MCF 10A (cell line): ENCODE measurements at regions of chr15 and their contacts with region 1.

Region 1: GRCh38 chr15:55846116-55846707 is 103.3 kb upstream of the PRTG start:
- DNase-seq: peak; percentile 81
- H3K4me3 Mint-ChIP-seq: no peak overlapping the region
- H3K27ac Mint-ChIP-seq: no peak overlapping the region
- H3K4me1 Mint-ChIP-seq: peaks cover 6% of the 10 kb centered on the region
- H3K27me3 Mint-ChIP-seq: no peaks in the 10 kb centered on the region
- CTCF ChIP-seq: peak; percentile 79

Region 2: DNA sequence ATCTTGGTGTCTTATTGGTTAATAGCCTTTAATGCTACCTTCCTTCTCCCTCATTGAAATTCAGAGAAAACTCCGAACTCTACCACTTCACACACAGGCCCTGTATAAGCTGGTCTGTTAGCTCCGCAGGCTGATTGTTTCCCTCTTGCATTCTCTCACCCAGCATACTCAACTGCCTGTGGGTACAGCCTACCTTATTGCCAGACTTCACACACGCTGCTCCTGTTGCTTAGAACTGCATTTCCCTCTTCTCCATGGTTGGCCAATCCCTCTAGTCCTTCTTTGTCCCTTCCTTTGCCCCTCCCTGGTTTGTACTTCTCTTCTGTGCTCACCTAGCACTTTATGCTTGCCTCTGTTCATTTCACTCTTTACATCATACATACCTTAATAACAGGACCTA is 10.3 kb before region 1 on chr15:
- CTCF ChIA-PET with region 1: interaction called, 13 read pairs
- POLR2A ChIA-PET with region 1: interaction called, 4 read pairs
- intact Hi-C with region 1: no loop called
- DNase-seq: no peak
- H3K4me3 Mint-ChIP-seq: no peak overlapping the region
- H3K27ac Mint-ChIP-seq: no peak overlapping the region
- H3K4me1 Mint-ChIP-seq: no peaks in the 10 kb centered on the region
- H3K27me3 Mint-ChIP-seq: no peaks in the 10 kb centered on the region
- CTCF ChIP-seq: no peak

Region 3: DNA sequence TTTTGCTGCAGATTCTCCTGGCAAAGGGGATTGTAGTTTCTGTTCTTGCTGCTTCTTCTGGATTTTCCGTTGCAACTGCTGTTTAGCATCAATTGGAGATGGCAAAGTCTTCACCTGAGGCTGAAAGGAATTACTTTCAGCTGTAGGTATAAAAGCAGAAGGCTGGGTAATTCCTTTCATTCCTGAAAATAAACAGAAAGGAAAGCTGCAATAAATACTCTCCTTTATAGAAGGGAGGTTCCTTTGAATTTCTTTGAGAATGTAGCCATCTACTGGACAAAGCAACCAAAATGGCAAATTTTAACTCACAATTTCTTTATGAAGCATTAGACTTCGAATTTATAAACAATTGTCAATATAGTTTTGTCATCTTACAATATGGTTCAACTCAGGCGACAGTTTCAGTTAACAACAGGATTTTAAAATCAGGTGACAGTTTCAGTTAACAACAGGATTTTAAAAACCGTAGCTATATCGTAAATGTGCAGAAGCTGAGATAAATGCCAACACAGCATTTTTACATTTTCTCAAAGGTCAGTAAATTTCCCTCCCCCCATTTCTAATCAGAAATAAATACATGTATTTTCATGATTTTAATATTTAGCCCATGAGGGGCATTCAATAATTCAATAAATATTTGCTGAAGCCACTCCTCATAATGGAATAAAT is 252.1 kb after region 1 on chr15:
- CTCF ChIA-PET with region 1: no interaction called
- POLR2A ChIA-PET with region 1: no interaction called
- intact Hi-C with region 1: loop called (anchors 5 kb)
- DNase-seq: no peak
- H3K4me3 Mint-ChIP-seq: no peak overlapping the region
- H3K27ac Mint-ChIP-seq: no peak overlapping the region
- H3K4me1 Mint-ChIP-seq: peaks cover 6% of the 10 kb centered on the region
- H3K27me3 Mint-ChIP-seq: no peaks in the 10 kb centered on the region
- CTCF ChIP-seq: no peak

Region 4: GRCh38 chr15:56176996-56177395 is 330.8 kb after region 1 on chr15:
- CTCF ChIA-PET with region 1: no interaction called
- POLR2A ChIA-PET with region 1: no interaction called
- intact Hi-C with region 1: no loop called
- DNase-seq: peak; percentile 9
- H3K4me3 Mint-ChIP-seq: no peak overlapping the region
- H3K27ac Mint-ChIP-seq: no peak overlapping the region
- H3K4me1 Mint-ChIP-seq: peaks cover 12% of the 10 kb centered on the region
- H3K27me3 Mint-ChIP-seq: no peaks in the 10 kb centered on the region
- CTCF ChIP-seq: no peak